Natural killer cell (primary cell): ENCODE measurements at regions of chr5 and their contacts with region 1.

Region 1: GRCh38 chr5:138337685-138338410 is at the start of gene FAM53C:
- DNase-seq: peak; percentile 95 to 96
- ATAC-seq: peak; percentile 79 to 93 (median 86)
- H3K4me3 ChIP-seq: peak within 1 kb of the TSS; percentile 61
- H3K4me3 Mint-ChIP-seq: peak within 1 kb of the TSS; percentile 88
- H3K27ac ChIP-seq: peak within 1 kb of the TSS; percentile 97
- H3K27ac Mint-ChIP-seq: peak within 1 kb of the TSS; percentile 96 to 99
- H3K4me1 ChIP-seq: peaks cover 18% of the 10 kb centered on the region
- H3K4me1 Mint-ChIP-seq: peaks cover 40 to 41% of the 10 kb centered on the region in 2 donors
- H3K27me3 ChIP-seq: no peaks in the 10 kb centered on the region
- H3K27me3 Mint-ChIP-seq: no peaks in the 10 kb centered on the region
- CTCF ChIP-seq: no peak
- total RNA-seq, gene FAM53C: 65.1 to 140 (median 73.6) TPM

Region 2: DNA sequence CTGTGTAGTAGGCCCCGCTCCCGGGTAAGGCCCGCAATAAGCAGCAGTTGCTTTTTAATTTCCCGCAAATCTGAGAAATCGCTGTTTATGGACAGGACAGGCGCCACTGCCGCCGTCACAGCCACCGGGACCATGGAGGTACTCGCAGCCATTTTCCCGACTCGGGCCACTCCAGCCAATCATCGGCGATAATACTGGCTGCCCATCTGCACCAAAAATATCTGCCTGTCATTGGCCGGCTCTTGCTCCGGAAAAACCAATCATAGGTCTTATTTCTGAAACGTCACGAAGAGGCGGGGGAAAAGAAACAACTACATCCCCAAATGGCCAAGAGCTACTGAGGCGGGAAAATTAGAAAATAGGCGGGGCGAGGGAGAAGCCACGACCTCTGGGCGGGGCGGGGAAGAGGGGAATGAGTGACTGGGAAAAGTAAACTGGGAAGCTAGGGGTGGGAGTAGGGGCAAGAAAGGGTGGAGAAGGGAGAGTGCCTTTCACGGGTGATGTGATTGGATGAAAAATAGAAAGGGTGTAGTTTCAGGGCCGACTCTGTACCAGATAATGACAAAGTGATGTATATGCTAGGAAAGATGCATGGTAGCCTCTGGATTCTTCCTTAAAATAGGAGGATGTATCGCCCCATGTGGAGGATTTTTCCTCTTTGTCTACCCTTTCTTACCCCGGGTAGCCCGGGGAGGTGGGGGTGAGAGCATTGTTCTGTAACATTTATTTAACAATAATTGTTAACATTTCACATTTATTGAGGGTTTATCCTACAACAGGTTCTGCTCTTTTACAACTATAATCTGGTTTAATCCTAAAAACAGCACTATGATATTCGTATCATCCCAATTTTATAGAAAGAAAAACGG is 124.5 kb before region 1 on chr5 and contains the start of gene CDC23:
- intact Hi-C with region 1: loop called (anchors 2 kb)
- DNase-seq: peak; percentile 82 to 97
- ATAC-seq: peak; percentile 97
- H3K4me3 ChIP-seq: peak within 1 kb of the TSS; percentile 90
- H3K4me3 Mint-ChIP-seq: peak within 1 kb of the TSS; percentile 99
- H3K27ac ChIP-seq: peak within 1 kb of the TSS; percentile 73
- H3K27ac Mint-ChIP-seq: peak within 1 kb of the TSS; percentile 96 to 99
- H3K4me1 ChIP-seq: peaks cover 16% of the 10 kb centered on the region
- H3K4me1 Mint-ChIP-seq: peaks cover 15 to 26% of the 10 kb centered on the region in 2 donors
- H3K27me3 ChIP-seq: no peaks in the 10 kb centered on the region
- H3K27me3 Mint-ChIP-seq: no peaks in the 10 kb centered on the region
- CTCF ChIP-seq: no peak
- total RNA-seq, gene CDC23: 16.3 to 25.2 (median 24.6) TPM

Region 3: GRCh38 chr5:138352071-138352721 is 14.3 kb after region 1 on chr5 and contains the start of gene KDM3B:
- intact Hi-C with region 1: loop called (anchors 2 kb)
- DNase-seq: peak; percentile 95 to 98
- ATAC-seq: peak; percentile 86 to 98 (median 87)
- H3K4me3 ChIP-seq: peak within 1 kb of the TSS; percentile 97
- H3K4me3 Mint-ChIP-seq: peak within 1 kb of the TSS; percentile 95
- H3K27ac ChIP-seq: peak within 1 kb of the TSS; percentile 97
- H3K27ac Mint-ChIP-seq: peak within 1 kb of the TSS; percentile 94 to 97
- H3K4me1 ChIP-seq: peaks cover 18% of the 10 kb centered on the region
- H3K4me1 Mint-ChIP-seq: peaks cover 44 to 45% of the 10 kb centered on the region in 2 donors
- H3K27me3 ChIP-seq: no peaks in the 10 kb centered on the region
- H3K27me3 Mint-ChIP-seq: no peaks in the 10 kb centered on the region
- CTCF ChIP-seq: peak; percentile 98
- total RNA-seq, gene KDM3B: 82.3 to 87.1 (median 82.3) TPM